K562 (cell line): ENCODE measurements at regions of chr13 and their contacts with region 1.

Region 1: GRCh38 chr13:100235311-100235901 is 146.5 kb downstream of the PCCA start:
- DNase-seq: peak; percentile 13 to 44 (median 24)
- ATAC-seq: no peak
- H3K4me3 ChIP-seq: no peak overlapping the region
- H3K27ac ChIP-seq: no peak overlapping the region
- H3K4me1 ChIP-seq: no peaks in the 10 kb centered on the region
- H3K27me3 ChIP-seq: no peaks in the 10 kb centered on the region
- CTCF ChIP-seq: peak; percentile 51 to 67 (median 51); a peak in 5 of 6 replicates
- EP300 ChIP-seq: no peak
- POLR2A ChIP-seq: no peak
- RAD21 ChIP-seq: peak; percentile 63 to 76

Region 2: GRCh38 chr13:99436686-99437416 is 798.6 kb before region 1 on chr13:
- CTCF ChIA-PET with region 1: interaction called, 3 read pairs
- POLR2A ChIA-PET with region 1: no interaction called
- in situ Hi-C with region 1: loop called (anchors 25 kb)
- intact Hi-C with region 1: no loop called
- DNase-seq: peak; percentile 75 to 89 (median 76)
- ATAC-seq: peak; percentile 76
- H3K4me3 ChIP-seq: no peak overlapping the region
- H3K27ac ChIP-seq: no peak overlapping the region; the same call in 2 of the 3 replicates
- H3K4me1 ChIP-seq: peaks cover 23 to 28% of the 10 kb centered on the region in 2 experiments; a peak in 4 of 5 replicates
- H3K27me3 ChIP-seq: peaks cover 0 to 13% of the 10 kb centered on the region in 2 experiments; a peak in 2 of 5 replicates
- CTCF ChIP-seq: peak; percentile 99 to 100 (median 100)
- EP300 ChIP-seq: 0 out of 2 replicates have a peak, but pooled peaks have one; percentile 6
- POLR2A ChIP-seq: no peak
- RAD21 ChIP-seq: peak; percentile 92 to 95

Region 3: DNA sequence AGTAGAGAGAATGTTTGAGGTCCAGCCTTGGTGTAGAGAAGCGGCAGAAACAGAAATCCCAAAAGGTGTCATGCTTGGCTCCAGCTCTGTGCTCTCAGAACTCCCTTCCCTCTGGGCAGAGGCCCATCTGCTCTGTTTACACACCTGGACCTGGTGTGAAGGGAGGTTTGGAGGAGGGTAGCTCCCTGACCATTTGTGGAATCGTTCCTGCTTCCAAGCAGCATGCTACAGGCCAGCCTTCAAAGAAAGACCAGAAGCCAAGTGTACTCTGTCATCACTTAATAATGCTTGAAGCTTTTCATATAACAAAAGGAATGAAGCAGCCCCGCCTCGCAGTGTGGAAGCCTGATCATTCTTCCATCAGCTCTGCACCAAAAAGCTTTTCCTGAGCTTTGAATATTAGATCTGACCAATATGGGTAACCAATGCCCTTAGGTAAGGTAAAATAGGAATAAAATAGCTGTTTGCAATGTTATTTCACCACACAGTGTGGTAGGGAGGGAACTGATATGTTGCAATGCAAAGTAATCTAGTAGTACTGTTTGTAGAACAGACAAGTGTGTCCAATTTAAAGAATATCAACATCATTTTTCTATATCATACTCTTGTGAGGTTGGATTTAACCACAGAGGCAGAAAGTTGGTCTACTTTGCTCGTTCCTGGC is 327.1 kb before region 1 on chr13:
- CTCF ChIA-PET with region 1: no interaction called
- POLR2A ChIA-PET with region 1: no interaction called
- in situ Hi-C with region 1: loop called (anchors 10 kb)
- intact Hi-C with region 1: loop called (anchors 2 kb)
- DNase-seq: no peak
- ATAC-seq: no peak
- H3K4me3 ChIP-seq: no peak overlapping the region
- H3K27ac ChIP-seq: no peak overlapping the region
- H3K4me1 ChIP-seq: no peaks in the 10 kb centered on the region; a peak in 1 of 5 replicates
- H3K27me3 ChIP-seq: peaks cover 0 to 4% of the 10 kb centered on the region in 2 experiments; a peak in 4 of 5 replicates
- CTCF ChIP-seq: no peak
- EP300 ChIP-seq: no peak
- POLR2A ChIP-seq: no peak
- RAD21 ChIP-seq: no peak

Region 4: DNA sequence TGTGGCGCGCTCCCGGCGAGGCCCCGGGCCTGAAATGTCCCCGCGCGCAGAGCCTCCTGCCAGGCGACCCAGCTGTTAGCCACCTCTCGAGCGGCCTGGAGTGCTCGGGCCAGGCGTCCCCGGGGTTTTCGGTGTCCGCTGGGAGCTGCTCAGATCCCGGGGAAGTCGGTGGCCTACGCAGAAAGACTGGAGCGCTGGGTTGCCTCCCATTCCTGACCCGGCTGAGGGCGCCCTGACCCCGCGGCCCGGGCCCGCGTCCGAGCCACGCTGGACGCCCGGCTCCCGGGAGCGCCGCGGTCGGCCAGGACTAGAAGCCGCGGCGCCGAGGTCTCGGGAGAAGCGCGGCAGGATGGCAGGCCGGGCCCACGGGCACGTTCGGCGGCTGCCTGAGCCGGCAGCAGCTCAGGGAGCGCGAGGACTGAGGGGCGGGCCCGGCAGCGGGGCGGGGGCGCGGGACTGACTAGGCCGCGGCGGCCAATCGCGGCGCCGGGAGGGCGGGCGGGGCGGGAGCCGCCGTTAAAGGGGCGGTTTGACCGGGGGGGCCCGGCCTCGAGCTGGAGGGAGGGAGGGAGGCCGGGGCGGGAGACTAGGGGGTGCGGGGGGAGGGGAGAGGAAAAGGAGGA is 255.1 kb before region 1 on chr13:
- CTCF ChIA-PET with region 1: no interaction called
- POLR2A ChIA-PET with region 1: no interaction called
- in situ Hi-C with region 1: no loop called
- intact Hi-C with region 1: loop called (anchors 5 kb)
- DNase-seq: peak; percentile 83 to 90 (median 86)
- ATAC-seq: peak; percentile 79
- H3K4me3 ChIP-seq: peak overlapping the region; percentile 59
- H3K27ac ChIP-seq: peak overlapping the region; percentile 92
- H3K4me1 ChIP-seq: peaks cover 5 to 51% of the 10 kb centered on the region in 2 experiments; a peak in 3 of 5 replicates
- H3K27me3 ChIP-seq: no peaks in the 10 kb centered on the region
- CTCF ChIP-seq: peak in 1 of 3 experiments; percentile 23; a peak in 1 of 6 replicates
- EP300 ChIP-seq: no peak
- POLR2A ChIP-seq: peak; percentile 35; the same call in 1 of the 2 replicates
- RAD21 ChIP-seq: peak in 1 of 2 experiments; percentile 32; a peak in 1 of 4 replicates

Region 5: DNA sequence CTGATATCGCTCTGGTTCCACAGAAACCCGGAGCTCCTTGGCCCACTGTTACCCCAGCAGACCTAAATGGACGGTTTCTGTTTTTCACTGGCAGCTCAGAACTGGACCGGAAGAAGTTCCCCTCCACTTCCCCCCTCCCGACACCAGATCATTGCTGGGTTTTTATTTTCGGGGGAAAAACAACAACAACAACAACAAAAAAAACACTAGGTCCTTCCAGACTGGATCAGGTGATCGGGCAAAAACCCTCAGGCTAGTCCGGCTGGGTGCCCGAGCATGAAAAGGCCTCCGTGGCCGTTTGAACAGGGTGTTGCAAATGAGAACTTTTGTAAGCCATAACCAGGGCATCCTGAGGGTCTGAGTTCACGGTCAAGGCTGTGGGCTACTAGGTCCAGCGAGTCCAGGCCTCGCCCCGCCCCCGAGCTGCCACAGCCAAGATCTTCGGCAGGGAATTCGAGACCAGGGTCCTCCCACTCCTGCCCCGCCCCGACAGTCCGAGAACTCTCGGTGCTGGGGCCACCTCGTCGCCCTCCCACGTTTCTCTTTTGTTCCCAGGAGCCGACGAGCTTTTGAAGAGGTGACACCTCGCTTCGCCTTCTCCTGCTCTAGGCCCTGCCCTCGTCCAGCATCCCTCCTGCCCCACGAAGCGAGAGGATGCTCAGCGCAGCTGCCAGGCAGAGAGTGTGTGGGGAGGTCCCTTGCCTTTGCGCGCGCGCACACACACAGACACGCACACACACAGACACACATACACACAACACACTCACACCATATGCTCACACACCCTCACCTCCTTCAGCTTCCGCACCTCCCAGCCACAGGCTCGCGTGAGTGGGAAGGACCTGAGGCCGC is 245.1 kb before region 1 on chr13:
- CTCF ChIA-PET with region 1: no interaction called
- POLR2A ChIA-PET with region 1: no interaction called
- in situ Hi-C with region 1: no loop called
- intact Hi-C with region 1: no loop called
- DNase-seq: no peak
- ATAC-seq: no peak
- H3K4me3 ChIP-seq: no peak overlapping the region
- H3K27ac ChIP-seq: no peak overlapping the region
- H3K4me1 ChIP-seq: peaks cover 0 to 22% of the 10 kb centered on the region in 2 experiments; a peak in 2 of 5 replicates
- H3K27me3 ChIP-seq: peaks cover 0 to under 1% of the 10 kb centered on the region in 2 experiments; a peak in 3 of 5 replicates
- CTCF ChIP-seq: no peak
- EP300 ChIP-seq: no peak
- POLR2A ChIP-seq: no peak
- RAD21 ChIP-seq: no peak

Region 6: GRCh38 chr13:100138859-100139491 is 96.4 kb before region 1 on chr13:
- CTCF ChIA-PET with region 1: no interaction called
- POLR2A ChIA-PET with region 1: no interaction called
- in situ Hi-C with region 1: no loop called
- intact Hi-C with region 1: no loop called
- DNase-seq: no peak
- ATAC-seq: no peak
- H3K4me3 ChIP-seq: no peak overlapping the region
- H3K27ac ChIP-seq: no peak overlapping the region
- H3K4me1 ChIP-seq: no peaks in the 10 kb centered on the region
- H3K27me3 ChIP-seq: no peaks in the 10 kb centered on the region
- CTCF ChIP-seq: no peak
- EP300 ChIP-seq: no peak
- POLR2A ChIP-seq: no peak
- RAD21 ChIP-seq: no peak

Region 7: DNA sequence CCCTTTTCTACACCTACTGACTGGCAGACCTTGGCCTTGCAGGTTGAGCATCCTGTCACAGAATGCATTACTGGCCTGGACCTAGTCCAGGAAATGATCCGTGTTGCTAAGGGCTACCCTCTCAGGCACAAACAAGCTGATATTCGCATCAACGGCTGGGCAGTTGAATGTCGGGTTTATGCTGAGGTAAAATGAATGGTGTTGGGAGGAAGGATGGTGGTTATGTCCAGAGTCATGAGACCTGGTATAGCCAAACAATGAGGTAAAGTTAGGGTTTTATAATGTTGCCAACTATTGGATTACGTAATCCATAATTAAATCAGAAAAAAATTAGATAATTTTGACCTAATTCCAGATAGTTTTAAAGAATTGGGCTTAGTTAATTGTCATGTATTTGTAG is 66.0 kb after region 1 on chr13:
- CTCF ChIA-PET with region 1: no interaction called
- POLR2A ChIA-PET with region 1: no interaction called
- in situ Hi-C with region 1: no loop called
- intact Hi-C with region 1: no loop called
- DNase-seq: no peak
- ATAC-seq: no peak
- H3K4me3 ChIP-seq: no peak overlapping the region
- H3K27ac ChIP-seq: no peak overlapping the region
- H3K4me1 ChIP-seq: no peaks in the 10 kb centered on the region
- H3K27me3 ChIP-seq: no peaks in the 10 kb centered on the region
- CTCF ChIP-seq: no peak
- EP300 ChIP-seq: no peak
- POLR2A ChIP-seq: no peak
- RAD21 ChIP-seq: no peak

Region 8: GRCh38 chr13:100514788-100515409 is 279.5 kb after region 1 on chr13:
- CTCF ChIA-PET with region 1: no interaction called
- POLR2A ChIA-PET with region 1: no interaction called
- in situ Hi-C with region 1: no loop called
- intact Hi-C with region 1: loop called (anchors 1 kb)
- DNase-seq: peak; percentile 74 to 82 (median 80)
- ATAC-seq: peak; percentile 99
- H3K4me3 ChIP-seq: no peak overlapping the region
- H3K27ac ChIP-seq: no peak overlapping the region
- H3K4me1 ChIP-seq: no peaks in the 10 kb centered on the region
- H3K27me3 ChIP-seq: peaks cover 0 to 3% of the 10 kb centered on the region in 2 experiments; a peak in 1 of 5 replicates
- CTCF ChIP-seq: peak; percentile 83 to 86 (median 85)
- EP300 ChIP-seq: no peak
- POLR2A ChIP-seq: no peak
- RAD21 ChIP-seq: peak; percentile 82 to 88